GM12878 (cell line): ENCODE measurements at regions of chr11 and their contacts with region 1.

Region 1: DNA sequence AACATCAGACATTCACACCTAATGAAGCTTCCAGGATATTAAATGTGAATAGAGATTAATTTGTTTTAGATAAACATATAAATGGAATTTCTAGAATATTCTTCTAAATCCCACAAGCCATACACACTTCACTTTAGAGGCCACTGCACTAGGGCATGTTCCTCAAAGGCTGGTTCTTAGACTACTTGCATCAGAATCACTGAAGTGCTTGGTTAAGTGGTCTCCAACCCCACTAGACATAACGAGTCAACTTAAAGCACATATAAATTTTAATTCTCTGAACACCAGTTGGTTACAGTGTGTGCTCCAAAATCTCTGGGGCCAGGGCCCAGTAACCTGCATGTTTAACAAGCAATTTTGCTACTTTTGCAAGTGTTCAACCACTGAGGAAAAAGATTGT is 7.9 kb upstream of the ALKBH8 start:
- DNase-seq: no peak
- ATAC-seq: no peak
- H3K4me3 ChIP-seq: no peak overlapping the region
- H3K27ac ChIP-seq: no peak overlapping the region
- H3K4me1 ChIP-seq: no peaks in the 10 kb centered on the region; the same call in 1 of the 2 replicates
- H3K27me3 ChIP-seq: no peaks in the 10 kb centered on the region
- CTCF ChIP-seq: no peak
- EP300 ChIP-seq: no peak
- POLR2A ChIP-seq: no peak
- RAD21 ChIP-seq: no peak

Region 2: GRCh38 chr11:106457727-106458126 is 1115.7 kb before region 1 on chr11:
- CTCF ChIA-PET with region 1: no interaction called
- POLR2A ChIA-PET with region 1: no interaction called
- RAD21 ChIA-PET with region 1: no interaction called
- SMC1A ChIA-PET with region 1: no interaction called
- in situ Hi-C with region 1: no loop called
- intact Hi-C with region 1: no loop called
- DNase-seq: no peak
- ATAC-seq: no peak
- H3K4me3 ChIP-seq: no peak overlapping the region
- H3K27ac ChIP-seq: no peak overlapping the region
- H3K4me1 ChIP-seq: no peaks in the 10 kb centered on the region
- H3K27me3 ChIP-seq: no peaks in the 10 kb centered on the region
- CTCF ChIP-seq: no peak
- EP300 ChIP-seq: no peak
- POLR2A ChIP-seq: no peak
- RAD21 ChIP-seq: no peak

Region 3: DNA sequence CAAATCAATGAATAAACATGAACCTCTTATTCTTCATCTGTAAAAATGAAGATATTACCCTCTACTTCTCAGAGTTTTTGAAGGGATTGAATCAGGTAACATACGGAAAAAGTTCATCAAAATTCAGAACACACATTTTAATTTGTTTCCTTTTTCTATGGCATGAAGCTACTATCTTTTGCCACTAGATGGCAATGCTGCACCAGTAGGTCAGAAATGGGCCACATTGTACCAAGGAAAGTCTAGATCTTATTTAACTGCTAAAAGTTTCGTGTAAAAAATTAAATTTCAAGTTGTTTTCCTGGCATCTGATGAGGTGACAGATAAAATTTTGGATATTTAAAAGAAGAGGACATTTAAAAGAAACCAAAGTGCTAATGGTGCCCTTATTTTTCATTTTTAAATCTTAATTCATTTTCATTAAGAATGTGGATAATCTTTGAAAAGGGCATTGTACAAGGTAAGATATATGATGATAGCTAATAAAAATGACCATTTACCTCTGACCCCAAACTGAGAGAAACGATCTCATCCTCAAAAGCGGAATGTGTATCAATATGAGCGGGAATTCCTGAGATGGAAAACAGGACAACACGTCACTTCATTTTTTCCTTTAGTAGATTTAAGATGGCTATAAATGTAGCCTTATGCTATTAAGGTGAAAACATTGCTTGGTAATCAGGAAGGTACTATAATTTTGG is 24.0 kb before region 1 on chr11:
- CTCF ChIA-PET with region 1: interaction called, 311 read pairs
- POLR2A ChIA-PET with region 1: no interaction called
- RAD21 ChIA-PET with region 1: interaction called, 3 read pairs
- SMC1A ChIA-PET with region 1: interaction called, 10 read pairs
- in situ Hi-C with region 1: no loop called
- intact Hi-C with region 1: no loop called
- DNase-seq: no peak
- ATAC-seq: peak; percentile 78
- H3K4me3 ChIP-seq: no peak overlapping the region
- H3K27ac ChIP-seq: no peak overlapping the region
- H3K4me1 ChIP-seq: no peaks in the 10 kb centered on the region
- H3K27me3 ChIP-seq: no peaks in the 10 kb centered on the region
- CTCF ChIP-seq: peak; percentile 67 to 74 (median 71)
- EP300 ChIP-seq: no peak
- POLR2A ChIP-seq: no peak
- RAD21 ChIP-seq: peak; percentile 81

Region 4: DNA sequence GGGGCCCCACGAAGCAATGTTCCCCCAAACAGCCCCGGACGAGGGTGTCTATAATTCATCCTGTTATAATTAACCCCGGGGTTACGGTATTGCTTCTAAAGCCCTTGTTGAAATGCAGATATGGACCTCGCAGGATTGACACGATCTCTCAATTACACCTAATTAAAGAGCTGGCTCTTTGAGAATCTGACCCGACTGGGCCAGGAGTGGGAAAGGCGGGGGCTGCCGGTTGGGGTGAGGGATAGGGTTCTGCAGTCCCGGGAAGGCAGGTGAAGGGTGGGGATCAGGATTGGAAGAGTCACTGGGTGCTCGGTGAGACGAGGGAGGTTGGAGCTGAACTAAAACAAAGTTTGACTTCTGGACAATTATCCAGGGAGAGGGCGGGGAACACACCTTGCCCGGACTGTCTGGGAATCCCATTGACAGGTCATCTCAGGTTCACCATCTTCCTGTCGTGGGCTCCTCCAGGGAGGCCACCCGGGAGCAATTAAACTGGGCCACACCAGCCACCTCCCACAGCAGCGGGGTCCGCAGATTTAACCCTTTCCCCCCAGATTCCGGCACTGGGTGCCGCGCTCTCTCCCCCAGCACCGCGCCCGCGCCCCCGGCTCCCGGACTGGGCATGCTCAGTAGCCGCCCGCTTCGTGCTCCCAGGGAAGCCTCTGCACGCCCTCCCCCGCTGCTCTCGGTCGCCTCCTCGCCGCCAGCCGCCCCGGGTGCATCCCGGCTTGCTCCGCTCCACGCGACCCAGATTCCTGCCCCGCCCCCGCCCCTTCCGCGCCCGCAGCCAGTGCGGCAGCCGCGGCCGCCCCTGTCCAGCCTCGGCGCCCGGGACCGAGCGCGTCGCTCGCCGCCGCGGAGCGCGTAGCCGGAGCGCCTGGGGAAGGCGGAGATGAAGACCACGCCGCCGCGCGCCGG is 17.3 kb after region 1 on chr11 and contains the start of gene ELMOD1:
- CTCF ChIA-PET with region 1: interaction called, 12 read pairs
- POLR2A ChIA-PET with region 1: no interaction called
- RAD21 ChIA-PET with region 1: interaction called, 3 read pairs
- SMC1A ChIA-PET with region 1: interaction called, 3 read pairs
- in situ Hi-C with region 1: no loop called
- intact Hi-C with region 1: no loop called
- DNase-seq: no peak
- ATAC-seq: peak; percentile 76
- H3K4me3 ChIP-seq: peak within 1 kb of the TSS; percentile 66; the same call in 1 of the 2 replicates
- H3K27ac ChIP-seq: no peak within 1 kb of the TSS
- H3K4me1 ChIP-seq: no peaks in the 10 kb centered on the region
- H3K27me3 ChIP-seq: peaks cover 10 to 22% of the 10 kb centered on the region in 2 experiments
- CTCF ChIP-seq: no peak
- EP300 ChIP-seq: no peak
- POLR2A ChIP-seq: no peak
- RAD21 ChIP-seq: no peak
- polyA plus RNA-seq, gene ELMOD1: not detected

Region 5: DNA sequence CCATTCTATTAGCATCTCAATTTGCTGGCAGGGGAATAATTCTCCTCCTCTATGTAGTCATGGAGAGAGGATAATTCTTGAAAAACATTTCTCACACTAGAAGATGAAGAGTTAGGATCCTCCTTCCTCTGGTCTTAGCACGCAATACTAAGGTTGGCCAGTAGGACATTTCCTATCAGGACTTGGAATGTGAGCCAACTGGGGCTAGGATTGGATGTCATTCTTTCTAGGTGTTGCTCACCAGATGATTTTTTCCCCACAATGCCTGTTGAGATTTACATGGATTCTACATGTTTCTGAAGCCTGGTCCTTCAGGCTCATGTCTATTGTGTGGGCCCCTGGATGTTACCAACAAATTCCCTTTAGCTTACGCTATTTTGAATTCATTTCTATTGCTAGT is 110.4 kb after region 1 on chr11:
- CTCF ChIA-PET with region 1: interaction called, 536 read pairs
- POLR2A ChIA-PET with region 1: interaction called, 4 read pairs
- RAD21 ChIA-PET with region 1: interaction called, 120 read pairs
- SMC1A ChIA-PET with region 1: interaction called, 249 read pairs
- in situ Hi-C with region 1: loop called (anchors 5 kb)
- intact Hi-C with region 1: loop called (anchors 1 kb)
- DNase-seq: no peak
- ATAC-seq: no peak
- H3K4me3 ChIP-seq: no peak overlapping the region
- H3K27ac ChIP-seq: no peak overlapping the region
- H3K4me1 ChIP-seq: peaks cover 5% of the 10 kb centered on the region; the same call in 1 of the 2 replicates
- H3K27me3 ChIP-seq: no peaks in the 10 kb centered on the region
- CTCF ChIP-seq: peak in 2 of 3 experiments; percentile 41 to 42; a peak in 3 of 6 replicates
- EP300 ChIP-seq: no peak
- POLR2A ChIP-seq: no peak
- RAD21 ChIP-seq: no peak

Region 6: GRCh38 chr11:107898270-107898669 is 324.8 kb after region 1 on chr11:
- CTCF ChIA-PET with region 1: no interaction called
- POLR2A ChIA-PET with region 1: no interaction called
- RAD21 ChIA-PET with region 1: interaction called, 3 read pairs
- SMC1A ChIA-PET with region 1: interaction called, 3 read pairs
- in situ Hi-C with region 1: loop called (anchors 10 kb)
- intact Hi-C with region 1: loop called (anchors 10 kb)
- DNase-seq: peak; percentile 24
- ATAC-seq: peak; percentile 93
- H3K4me3 ChIP-seq: no peak overlapping the region
- H3K27ac ChIP-seq: no peak overlapping the region
- H3K4me1 ChIP-seq: no peaks in the 10 kb centered on the region; the same call in 1 of the 2 replicates
- H3K27me3 ChIP-seq: no peaks in the 10 kb centered on the region
- CTCF ChIP-seq: peak; percentile 63 to 82 (median 67); a peak in 5 of 6 replicates
- EP300 ChIP-seq: no peak
- POLR2A ChIP-seq: no peak
- RAD21 ChIP-seq: peak; percentile 92